ENCODE measurements at regions of chr1 and their contacts with region 1.

Region 1: GRCh38 chr1:207454046-207454964 is at the start of gene CR2:
- DNase-seq: peak; percentile 83
- CTCF ChIP-seq: peak; percentile 56

Region 2: GRCh38 chr1:207423560-207424292 is 30.6 kb before region 1 on chr1:
- CTCF ChIA-PET with region 1: interaction called, 10 read pairs
- POLR2A ChIA-PET with region 1: interaction called, 7 read pairs
- DNase-seq: peak; percentile 27
- CTCF ChIP-seq: peak; percentile 23

Region 3: DNA sequence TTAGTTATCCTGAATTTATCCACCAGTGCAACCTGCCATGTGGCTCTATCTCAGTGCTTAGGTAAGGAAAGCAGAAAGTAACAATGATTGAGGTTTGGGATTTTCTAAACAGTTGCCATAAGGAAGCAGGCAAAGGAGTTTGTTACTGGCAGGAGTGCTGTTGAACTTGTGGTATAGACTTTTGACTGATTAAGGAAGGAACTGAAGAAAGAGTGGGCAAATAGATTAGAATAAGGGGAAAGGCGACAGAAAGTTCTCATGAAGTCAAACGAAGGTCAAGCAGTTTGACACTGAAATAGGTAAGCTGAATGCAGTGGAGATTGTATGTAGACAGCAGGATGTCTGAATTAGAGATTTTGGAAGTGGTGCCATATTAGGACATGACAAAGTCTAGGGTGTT is 24.3 kb before region 1 on chr1:
- CTCF ChIA-PET with region 1: interaction called, 10 read pairs
- POLR2A ChIA-PET with region 1: interaction called, 10 read pairs
- DNase-seq: peak; percentile 36
- CTCF ChIP-seq: no peak

Region 4: DNA sequence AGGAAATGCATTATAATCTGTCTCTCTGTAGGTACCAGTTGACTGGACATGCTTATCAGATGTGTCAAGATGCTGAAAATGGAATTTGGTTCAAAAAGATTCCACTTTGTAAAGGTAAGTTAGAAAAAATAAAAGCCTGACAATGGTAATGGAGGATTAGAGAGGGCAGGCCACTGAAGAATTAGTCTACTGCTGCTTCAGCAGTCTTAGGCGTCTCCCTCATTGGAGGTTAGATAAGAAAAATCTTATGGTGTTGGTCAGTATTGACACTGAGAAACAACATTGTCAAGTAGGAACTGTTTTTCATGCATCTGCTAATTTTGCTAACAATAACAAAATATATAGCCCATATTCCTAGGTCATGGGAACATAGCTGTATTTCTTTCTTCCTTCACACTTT is 19.9 kb after region 1 on chr1:
- CTCF ChIA-PET with region 1: interaction called, 11 read pairs
- POLR2A ChIA-PET with region 1: no interaction called
- DNase-seq: no peak
- CTCF ChIP-seq: no peak